Activated CD4-positive, alpha-beta T cell treated with anti-CD3 and anti-CD28 coated beads for 36 hours (primary cell): ENCODE measurements at regions of chr6 and their contacts with region 1.

Region 1: GRCh38 chr6:139124887-139125672 is 9.8 kb upstream of the HECA start:
- DNase-seq: peak; percentile 90
- ATAC-seq: peak; percentile 96
- H3K4me3 Mint-ChIP-seq: peak overlapping the region; percentile 58
- H3K27ac Mint-ChIP-seq: peak overlapping the region; percentile 95
- H3K4me1 Mint-ChIP-seq: peaks cover 51% of the 10 kb centered on the region
- H3K27me3 Mint-ChIP-seq: no peaks in the 10 kb centered on the region

Region 2: DNA sequence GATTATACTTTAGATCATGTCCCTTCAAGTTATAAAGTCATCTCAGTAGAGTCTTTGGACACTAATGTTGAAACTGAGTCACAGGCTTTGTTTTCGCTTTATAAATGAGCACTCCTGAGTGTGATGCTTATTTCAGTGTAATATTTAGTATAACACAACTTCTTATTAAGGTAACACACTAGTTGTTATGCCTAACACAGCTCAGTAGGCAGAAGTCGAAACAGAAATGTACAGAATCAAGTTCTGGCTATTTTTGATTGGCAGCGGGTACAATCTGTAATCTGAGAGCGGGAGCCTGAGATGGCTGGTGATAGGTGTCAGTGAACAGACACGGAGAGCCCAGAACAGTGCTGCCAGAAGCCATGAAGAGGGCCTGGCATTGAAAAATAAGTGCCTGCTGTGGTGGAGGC is 21.2 kb after region 1 on chr6:
- CTCF ChIA-PET with region 1: interaction called, 13 read pairs
- POLR2A ChIA-PET with region 1: interaction called, 4 read pairs
- intact Hi-C with region 1: loop called in 1 of 2 experiments (anchors 1 kb)
- DNase-seq: peak; percentile 60
- ATAC-seq: peak; percentile 71
- H3K4me3 Mint-ChIP-seq: peak overlapping the region; percentile 53
- H3K27ac Mint-ChIP-seq: peak overlapping the region; percentile 99
- H3K4me1 Mint-ChIP-seq: peaks cover 96% of the 10 kb centered on the region
- H3K27me3 Mint-ChIP-seq: no peaks in the 10 kb centered on the region

Region 3: DNA sequence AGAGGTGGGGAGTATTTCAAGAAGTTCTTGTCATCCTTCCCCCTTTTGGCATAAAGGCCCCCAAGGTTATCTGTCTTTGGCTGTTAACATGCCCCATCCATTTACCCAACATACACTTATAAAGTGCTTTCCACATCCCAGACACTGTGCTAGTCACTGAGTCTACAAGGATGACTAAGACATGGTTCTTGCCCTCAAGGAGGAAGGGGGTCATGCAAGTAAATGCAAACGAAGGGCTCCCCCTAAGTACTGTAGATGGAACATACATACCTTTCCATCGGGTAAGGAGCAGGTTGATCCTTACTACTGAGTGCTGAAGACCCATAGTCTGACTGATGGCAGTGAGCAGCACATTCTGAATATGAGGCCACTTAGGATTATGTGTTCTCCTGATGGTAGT is 48.1 kb after region 1 on chr6:
- CTCF ChIA-PET with region 1: interaction called, 8 read pairs
- POLR2A ChIA-PET with region 1: no interaction called
- intact Hi-C with region 1: loop called (anchors 1 kb)
- DNase-seq: no peak
- ATAC-seq: peak; percentile 89
- H3K4me3 Mint-ChIP-seq: no peak overlapping the region
- H3K27ac Mint-ChIP-seq: peak overlapping the region; percentile 87
- H3K4me1 Mint-ChIP-seq: peaks cover 91% of the 10 kb centered on the region
- H3K27me3 Mint-ChIP-seq: no peaks in the 10 kb centered on the region

Region 4: DNA sequence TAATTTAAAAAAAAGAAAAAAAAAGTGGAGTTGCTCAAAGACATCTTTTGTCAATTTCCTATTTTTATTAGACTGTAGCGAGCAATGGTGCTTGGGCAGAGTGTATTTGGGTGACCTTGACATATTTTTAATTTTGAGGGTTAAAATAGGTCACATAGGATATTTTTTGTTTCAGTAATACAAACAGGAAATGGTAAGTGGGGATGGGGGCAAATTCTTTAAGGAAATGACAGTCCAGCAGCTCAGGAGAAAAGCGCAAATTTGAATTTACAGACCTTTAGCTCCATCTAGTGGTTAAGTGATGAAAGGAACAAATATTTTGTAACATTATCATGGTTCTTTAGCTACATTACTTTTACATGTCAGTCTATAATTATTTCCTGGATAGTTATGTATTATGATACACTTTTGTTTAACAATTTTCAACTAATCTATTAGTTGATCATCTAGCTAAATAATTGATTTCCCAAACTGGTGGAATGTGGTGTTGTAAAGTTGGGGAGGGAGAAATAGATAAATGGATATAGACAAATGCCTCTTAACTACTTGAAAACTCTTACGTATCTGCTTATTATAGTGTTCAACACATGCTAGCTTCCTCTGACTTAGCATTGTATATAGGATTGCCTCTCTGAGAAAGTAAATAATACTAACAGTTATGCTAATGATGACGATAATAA is 239.4 kb after region 1 on chr6:
- CTCF ChIA-PET with region 1: interaction called, 18 read pairs
- POLR2A ChIA-PET with region 1: no interaction called
- intact Hi-C with region 1: loop called (anchors 1 kb)
- DNase-seq: no peak
- ATAC-seq: peak; percentile 57
- H3K4me3 Mint-ChIP-seq: no peak overlapping the region
- H3K27ac Mint-ChIP-seq: no peak overlapping the region
- H3K4me1 Mint-ChIP-seq: peaks cover 25% of the 10 kb centered on the region
- H3K27me3 Mint-ChIP-seq: no peaks in the 10 kb centered on the region